ENCODE measurements at regions of chr7 and their contacts with region 1.

Region 1: DNA sequence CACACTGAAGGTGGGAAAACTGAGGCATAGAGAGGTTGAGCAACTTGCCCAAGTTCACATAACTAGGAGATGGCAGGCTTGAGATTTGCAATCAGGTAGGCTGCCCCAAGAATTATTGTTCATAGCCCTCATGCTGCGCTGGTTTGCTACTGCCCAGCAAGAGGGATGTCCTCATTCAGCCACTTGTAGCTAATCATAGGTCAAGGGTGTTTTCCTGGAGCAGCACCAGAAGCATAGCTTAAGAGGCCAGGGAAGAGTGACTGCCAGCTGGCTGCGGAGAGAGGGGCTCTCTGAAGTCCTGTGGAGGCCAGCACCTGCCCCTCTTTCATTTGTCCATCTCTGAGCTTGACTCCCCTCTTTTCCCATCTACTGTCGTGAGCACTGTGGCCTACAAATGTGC is 15.0 kb downstream of the CDHR3 start:
- DNase-seq: no peak
- ATAC-seq: no peak
- H3K4me3 Mint-ChIP-seq: no peak overlapping the region
- H3K27ac Mint-ChIP-seq: no peak overlapping the region
- H3K4me1 Mint-ChIP-seq: no peaks in the 10 kb centered on the region
- H3K27me3 Mint-ChIP-seq: peaks cover 1% of the 10 kb centered on the region

Region 2: DNA sequence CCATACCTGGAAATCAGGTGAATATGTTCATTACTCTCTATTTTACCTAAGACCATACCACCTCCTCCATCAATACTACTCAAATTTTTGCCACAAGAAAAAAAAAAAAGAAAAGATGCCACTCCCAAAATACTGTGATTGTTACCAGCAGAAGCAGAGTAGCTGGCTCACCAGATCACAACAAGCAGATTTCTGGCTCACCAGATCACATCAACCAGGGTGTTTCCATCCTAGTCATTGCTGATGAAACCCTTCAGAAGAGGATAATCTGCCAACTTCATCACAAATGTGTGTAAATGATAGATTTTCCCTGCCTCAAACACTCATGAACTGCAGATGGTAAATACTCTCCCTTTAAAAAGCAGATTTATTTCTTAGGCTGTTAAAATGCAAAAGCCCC is 416.5 kb after region 1 on chr7:
- CTCF ChIA-PET with region 1: no interaction called
- POLR2A ChIA-PET with region 1: interaction called, 12 read pairs
- intact Hi-C with region 1: no loop called
- DNase-seq: no peak
- ATAC-seq: no peak
- H3K4me3 Mint-ChIP-seq: no peak overlapping the region
- H3K27ac Mint-ChIP-seq: no peak overlapping the region
- H3K4me1 Mint-ChIP-seq: peaks cover 5% of the 10 kb centered on the region
- H3K27me3 Mint-ChIP-seq: peaks cover 49% of the 10 kb centered on the region

Measured in activated CD4-positive, alpha-beta T cell treated with anti-CD3 and anti-CD28 coated beads for 36 hours (primary cell).